ENCODE measurements at regions of chr1 and their contacts with region 1.

Region 1: GRCh38 chr1:111399792-111400610 is 27.5 kb downstream of the OVGP1 start:
- DNase-seq: no peak
- ATAC-seq: no peak

Region 2: GRCh38 chr1:111154021-111154999 is 245.7 kb before region 1 on chr1:
- intact Hi-C with region 1: no loop called
- DNase-seq: no peak
- ATAC-seq: no peak

Region 3: DNA sequence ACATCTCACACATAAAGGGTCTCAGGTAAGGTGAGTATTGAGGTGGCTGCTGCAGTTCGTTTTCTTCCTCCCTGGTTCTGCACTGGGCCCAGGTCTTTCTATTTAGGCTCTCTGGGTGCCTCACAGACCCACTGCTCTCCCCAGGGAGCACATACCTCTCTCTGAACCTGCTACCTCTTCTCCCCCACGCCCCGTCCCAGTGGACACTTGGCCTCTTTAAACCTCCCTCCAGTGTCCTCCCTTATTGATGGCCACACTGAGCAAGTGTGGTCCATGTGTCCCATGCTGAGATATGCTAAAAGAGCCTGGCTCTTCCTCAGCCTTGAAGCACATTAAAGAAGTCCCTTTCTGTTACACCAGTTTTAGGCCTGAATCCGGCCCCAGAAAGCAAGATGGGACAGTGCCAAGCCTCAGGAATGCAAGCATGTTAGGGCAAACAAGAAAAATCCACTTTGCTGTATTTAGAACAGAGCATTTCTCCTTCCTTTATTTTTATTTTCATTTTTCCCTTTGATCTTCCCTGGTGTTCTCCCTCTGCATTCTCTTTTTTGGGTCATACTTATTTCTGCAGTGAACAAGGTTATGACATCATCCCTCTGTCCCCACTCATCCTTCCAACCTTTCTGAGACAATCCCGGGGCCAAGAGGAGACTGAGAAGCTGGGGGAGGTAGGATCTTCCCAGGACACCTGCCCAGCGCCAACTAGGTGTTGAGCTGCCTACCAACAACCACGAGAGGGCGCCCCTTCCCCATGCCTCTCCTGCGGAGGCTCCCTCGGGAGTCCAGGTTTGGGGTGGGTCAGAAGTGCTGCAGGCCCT is 177.5 kb before region 1 on chr1:
- intact Hi-C with region 1: loop called (anchors 5 kb)
- DNase-seq: peak; percentile 79
- ATAC-seq: peak; percentile 84

Region 4: DNA sequence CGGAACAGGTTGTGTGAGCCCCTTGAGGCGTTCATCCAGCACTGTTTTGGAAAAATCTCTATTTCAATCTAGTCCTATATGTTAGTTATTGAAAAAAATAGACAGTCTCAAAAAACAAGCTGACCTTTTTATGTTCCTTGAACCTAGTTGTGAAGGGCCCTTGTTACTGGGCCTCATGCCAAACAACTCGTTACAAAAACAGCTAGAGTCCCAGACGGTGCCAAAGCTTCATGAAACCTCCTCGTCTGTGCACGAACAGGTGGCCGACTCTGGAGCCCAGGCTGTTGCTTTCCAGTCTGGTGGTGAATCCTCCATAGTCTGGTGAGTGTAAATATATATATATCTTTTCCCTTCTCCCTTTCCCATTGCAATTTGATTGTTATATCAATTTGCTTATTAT is 109.4 kb before region 1 on chr1 and contains the start of gene CHIA:
- intact Hi-C with region 1: no loop called
- DNase-seq: no peak
- ATAC-seq: no peak
- total RNA-seq, gene CHIA: not detected

Region 5: GRCh38 chr1:111320106-111320879 is 79.7 kb before region 1 on chr1:
- intact Hi-C with region 1: no loop called
- DNase-seq: no peak
- ATAC-seq: no peak

Region 6: GRCh38 chr1:112981426-112981825 is 1581.4 kb after region 1 on chr1:
- intact Hi-C with region 1: no loop called
- DNase-seq: no peak
- ATAC-seq: peak; percentile 41